ENCODE measurements at regions of chr11 and their contacts with region 1.

Region 1: GRCh38 chr11:3609416-3610265 is 32.2 kb downstream of the ART5 start:
- DNase-seq: no peak
- H3K4me3 ChIP-seq: no peak overlapping the region
- CTCF ChIP-seq: peak; percentile 68

Region 2: GRCh38 chr11:3220521-3221407 is 388.9 kb before region 1 on chr11:
- CTCF ChIA-PET with region 1: no interaction called
- POLR2A ChIA-PET with region 1: no interaction called
- DNase-seq: no peak
- H3K4me3 ChIP-seq: no peak overlapping the region
- CTCF ChIP-seq: no peak

Region 3: GRCh38 chr11:3626308-3626951 is 16.8 kb after region 1 on chr11:
- CTCF ChIA-PET with region 1: interaction called, 20 read pairs
- POLR2A ChIA-PET with region 1: interaction called, 3 read pairs
- DNase-seq: no peak
- H3K4me3 ChIP-seq: no peak overlapping the region
- CTCF ChIP-seq: no peak